Activated CD8-positive, alpha-beta memory T cell treated with anti-CD3 and anti-CD28 coated beads, Interleukin-2, amount 10 ng/mL, durations not matched to agents 7 days and 5 days (primary cell): ENCODE measurements at regions of chr3 and their contacts with region 1.

Region 1: DNA sequence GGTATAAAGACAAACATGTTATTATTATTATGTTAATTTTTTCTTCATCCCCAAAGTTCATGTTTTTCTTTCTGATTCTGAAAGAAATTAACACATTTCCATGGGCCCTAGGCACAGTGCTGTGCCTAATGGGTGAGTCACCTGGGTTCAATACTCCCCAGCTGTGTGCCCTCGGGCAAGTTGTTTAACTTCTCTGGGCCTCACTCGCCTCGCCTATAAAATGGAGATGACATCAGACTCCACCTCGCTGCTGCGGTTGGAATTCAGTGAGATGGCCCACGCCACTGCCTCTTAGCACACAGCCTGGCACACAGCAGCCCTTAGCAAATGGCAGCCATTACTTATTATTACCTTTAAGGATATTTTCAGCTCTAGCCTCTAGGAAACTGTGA is 22.6 kb downstream of the DNASE1L3 start:
- DNase-seq: no peak
- ATAC-seq: no peak
- H3K4me3 Mint-ChIP-seq: no peak overlapping the region
- H3K27ac Mint-ChIP-seq: no peak overlapping the region
- H3K4me1 Mint-ChIP-seq: no peaks in the 10 kb centered on the region
- H3K27me3 Mint-ChIP-seq: no peaks in the 10 kb centered on the region

Region 2: DNA sequence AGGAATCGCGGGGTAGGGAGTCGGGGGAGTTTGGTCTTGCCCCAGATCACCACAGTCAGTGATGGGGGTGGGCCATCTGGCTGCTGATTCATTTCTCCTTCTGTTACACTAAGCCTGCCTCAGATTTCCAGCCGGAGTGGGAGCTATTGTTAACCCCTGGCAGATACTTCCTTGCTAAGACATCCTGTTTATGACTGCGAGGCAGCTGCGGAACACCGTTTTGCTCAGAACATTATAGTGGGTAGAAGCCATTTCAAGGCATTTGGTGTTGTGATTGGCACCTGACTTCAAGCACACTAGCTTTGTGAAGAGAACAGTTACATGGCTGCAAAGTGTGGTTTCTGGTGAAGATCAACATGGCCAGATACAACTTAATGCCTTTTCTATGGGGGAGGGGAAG is 106.1 kb before region 1 on chr3:
- CTCF ChIA-PET with region 1: no interaction called
- DNase-seq: no peak
- ATAC-seq: no peak
- H3K4me3 Mint-ChIP-seq: no peak overlapping the region
- H3K27ac Mint-ChIP-seq: no peak overlapping the region
- H3K4me1 Mint-ChIP-seq: peaks cover 23% of the 10 kb centered on the region
- H3K27me3 Mint-ChIP-seq: no peaks in the 10 kb centered on the region

Region 3: GRCh38 chr3:58120075-58120812 is 67.9 kb before region 1 on chr3:
- CTCF ChIA-PET with region 1: no interaction called
- DNase-seq: no peak
- ATAC-seq: no peak
- H3K4me3 Mint-ChIP-seq: no peak overlapping the region
- H3K27ac Mint-ChIP-seq: no peak overlapping the region
- H3K4me1 Mint-ChIP-seq: peaks cover 16% of the 10 kb centered on the region
- H3K27me3 Mint-ChIP-seq: no peaks in the 10 kb centered on the region

Region 4: DNA sequence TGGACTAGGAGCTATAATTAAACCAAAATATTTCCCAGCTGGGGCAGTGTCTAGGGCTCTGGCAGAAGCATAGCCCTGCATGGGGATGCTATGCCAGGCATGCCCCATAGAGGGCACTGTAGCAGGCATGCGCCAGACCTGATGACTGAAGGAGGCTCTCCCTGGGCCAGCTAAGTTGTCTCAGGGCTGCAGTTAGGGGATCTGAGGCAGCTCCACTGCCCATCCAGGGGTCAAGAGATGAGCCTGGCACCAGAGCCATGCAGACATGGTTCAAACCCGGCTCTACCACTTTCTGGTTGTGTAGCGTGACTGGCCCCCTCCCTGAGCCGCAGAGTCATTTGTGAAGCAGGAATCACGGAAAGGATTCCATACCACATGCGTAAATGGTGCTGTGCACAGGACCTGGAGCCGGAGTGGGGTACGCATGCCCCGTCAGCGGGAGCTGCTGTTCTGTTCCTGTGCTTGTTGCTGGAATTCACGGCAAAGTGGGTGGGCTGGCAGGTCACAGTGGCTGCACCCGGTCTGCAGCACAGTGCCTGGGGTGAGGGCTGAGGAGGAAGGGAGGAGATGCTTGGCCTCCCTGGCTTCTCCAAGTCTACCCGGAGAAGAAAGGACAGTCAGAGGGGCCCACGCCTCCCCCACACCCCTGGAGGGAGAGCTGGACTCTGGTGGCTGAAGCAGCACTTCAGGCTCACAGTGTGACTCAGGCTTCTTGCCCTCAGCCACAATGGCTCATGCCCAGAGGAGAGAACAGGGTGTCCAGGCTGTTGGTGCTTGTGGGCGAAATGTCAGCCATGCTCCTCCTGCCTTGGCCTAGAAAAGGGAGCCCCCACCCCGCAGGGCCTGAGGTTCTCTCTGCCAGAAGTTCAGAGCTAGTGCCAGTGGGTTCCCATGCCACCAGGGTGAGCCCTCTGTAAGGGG is 20.5 kb before region 1 on chr3:
- CTCF ChIA-PET with region 1: interaction called, 10 read pairs
- DNase-seq: peak; percentile 73
- ATAC-seq: peak; percentile 91
- H3K4me3 Mint-ChIP-seq: no peak overlapping the region
- H3K27ac Mint-ChIP-seq: no peak overlapping the region
- H3K4me1 Mint-ChIP-seq: no peaks in the 10 kb centered on the region
- H3K27me3 Mint-ChIP-seq: no peaks in the 10 kb centered on the region

Region 5: DNA sequence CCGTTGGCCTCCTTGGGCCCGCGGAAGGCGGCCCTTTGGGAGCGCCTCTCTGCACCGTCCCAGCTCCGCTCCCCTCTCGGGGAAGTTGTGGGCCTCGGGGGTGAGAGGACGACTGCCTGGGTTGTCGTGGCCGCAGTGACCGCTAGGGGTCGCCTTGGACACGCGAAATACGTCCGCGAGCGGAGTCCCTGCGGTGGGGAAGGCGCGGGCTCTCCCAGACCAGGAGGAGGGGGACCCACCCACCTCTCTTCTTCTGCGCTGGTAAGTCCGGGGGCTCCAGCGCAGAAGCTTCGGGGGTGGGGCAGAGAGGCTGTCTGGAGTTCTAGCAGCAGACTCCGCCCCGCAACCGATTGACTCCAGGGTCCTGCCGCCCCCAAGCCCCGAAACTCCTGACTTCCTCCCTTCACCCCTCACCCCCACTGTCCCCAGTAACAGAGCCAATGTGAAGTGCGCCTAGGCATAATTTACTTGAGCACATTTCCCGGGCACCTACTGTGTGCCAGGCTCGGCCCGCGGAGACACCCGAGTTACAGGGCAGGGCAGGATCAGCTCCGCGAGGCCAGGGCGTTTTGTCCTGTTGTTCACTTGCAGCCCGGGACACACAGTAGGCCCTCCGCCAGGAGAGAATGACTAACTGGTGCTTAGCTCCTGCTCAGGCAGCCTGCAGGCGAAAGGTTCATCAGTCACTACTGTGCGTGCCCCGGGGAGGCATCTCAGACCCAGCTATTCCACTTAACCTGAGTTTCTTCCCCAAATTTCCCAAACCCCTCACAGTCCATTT is 10.2 kb before region 1 on chr3:
- CTCF ChIA-PET with region 1: interaction called, 28 read pairs
- DNase-seq: peak; percentile 91
- ATAC-seq: peak; percentile 94
- H3K4me3 Mint-ChIP-seq: peak overlapping the region; percentile 62
- H3K27ac Mint-ChIP-seq: no peak overlapping the region
- H3K4me1 Mint-ChIP-seq: peaks cover 21% of the 10 kb centered on the region
- H3K27me3 Mint-ChIP-seq: peaks cover 6% of the 10 kb centered on the region

Region 6: DNA sequence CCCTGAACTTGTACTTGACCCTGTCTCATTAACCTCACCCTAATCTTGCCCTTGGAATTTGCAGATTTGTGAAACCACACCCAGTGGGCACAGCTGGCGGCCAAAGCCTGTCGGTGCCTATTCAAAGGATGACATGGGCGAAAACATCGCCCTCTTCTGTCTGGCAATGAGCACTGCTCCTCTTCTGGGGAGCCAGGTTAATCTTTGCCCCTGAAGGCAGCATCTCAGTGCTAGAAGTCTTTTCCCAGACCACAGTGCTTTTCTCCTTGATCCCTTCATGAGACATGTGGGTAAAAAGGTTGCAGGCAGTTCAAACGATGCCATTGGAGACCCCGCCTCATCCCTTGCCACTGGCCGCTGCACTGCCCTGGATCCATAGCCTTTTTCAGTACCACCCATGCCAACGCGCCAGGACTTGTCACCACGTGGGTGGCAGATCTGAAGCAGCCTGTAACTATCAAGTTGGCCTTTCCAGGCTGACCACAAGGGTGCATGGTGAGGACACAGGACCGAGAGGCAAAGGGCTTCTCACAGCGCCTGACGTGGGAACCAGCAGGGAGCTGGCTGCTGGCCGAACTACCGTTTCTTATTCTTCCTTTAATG is 29.1 kb after region 1 on chr3:
- CTCF ChIA-PET with region 1: interaction called, 53 read pairs
- DNase-seq: peak; percentile 65
- ATAC-seq: peak; percentile 81
- H3K4me3 Mint-ChIP-seq: no peak overlapping the region
- H3K27ac Mint-ChIP-seq: no peak overlapping the region
- H3K4me1 Mint-ChIP-seq: peaks cover 31% of the 10 kb centered on the region
- H3K27me3 Mint-ChIP-seq: peaks cover 4% of the 10 kb centered on the region

Region 7: DNA sequence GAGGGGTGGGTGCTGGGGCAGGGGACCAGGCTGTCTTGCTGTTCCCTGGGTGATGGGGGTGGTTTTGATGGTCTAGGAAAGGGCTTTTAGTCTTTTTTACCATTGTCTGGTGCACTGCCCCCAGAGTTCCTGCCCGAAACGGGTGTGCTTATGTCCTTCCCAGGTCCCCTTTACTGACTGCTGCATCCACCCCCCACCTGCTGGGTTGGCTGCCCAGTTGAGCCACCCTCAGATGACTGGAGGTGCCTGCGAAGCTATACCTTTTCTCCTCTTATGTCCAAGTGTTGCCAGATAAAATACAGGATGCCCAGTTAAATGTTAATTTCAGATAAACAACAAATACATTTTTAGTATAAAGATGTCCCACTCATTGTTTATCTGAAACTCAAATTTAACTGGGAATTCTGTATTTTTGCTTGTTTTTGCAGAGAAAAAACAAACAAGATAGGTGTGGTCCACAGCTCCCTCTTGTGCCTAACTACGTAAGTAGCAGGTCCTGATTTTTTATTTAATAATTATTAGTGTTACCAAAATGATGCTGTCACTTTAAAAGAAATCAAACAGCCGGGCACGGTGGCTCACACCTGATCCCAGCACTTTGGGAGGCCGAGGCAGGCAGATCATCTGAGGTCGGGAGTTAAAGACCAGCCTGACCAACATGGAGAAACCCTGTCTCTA is 111.8 kb after region 1 on chr3:
- CTCF ChIA-PET with region 1: interaction called, 41 read pairs
- DNase-seq: no peak
- ATAC-seq: no peak
- H3K4me3 Mint-ChIP-seq: no peak overlapping the region
- H3K27ac Mint-ChIP-seq: no peak overlapping the region
- H3K4me1 Mint-ChIP-seq: peaks cover under 1% of the 10 kb centered on the region
- H3K27me3 Mint-ChIP-seq: peaks cover 22% of the 10 kb centered on the region